ENCODE measurements at regions of chr2 and their contacts with region 1.

Region 1: DNA sequence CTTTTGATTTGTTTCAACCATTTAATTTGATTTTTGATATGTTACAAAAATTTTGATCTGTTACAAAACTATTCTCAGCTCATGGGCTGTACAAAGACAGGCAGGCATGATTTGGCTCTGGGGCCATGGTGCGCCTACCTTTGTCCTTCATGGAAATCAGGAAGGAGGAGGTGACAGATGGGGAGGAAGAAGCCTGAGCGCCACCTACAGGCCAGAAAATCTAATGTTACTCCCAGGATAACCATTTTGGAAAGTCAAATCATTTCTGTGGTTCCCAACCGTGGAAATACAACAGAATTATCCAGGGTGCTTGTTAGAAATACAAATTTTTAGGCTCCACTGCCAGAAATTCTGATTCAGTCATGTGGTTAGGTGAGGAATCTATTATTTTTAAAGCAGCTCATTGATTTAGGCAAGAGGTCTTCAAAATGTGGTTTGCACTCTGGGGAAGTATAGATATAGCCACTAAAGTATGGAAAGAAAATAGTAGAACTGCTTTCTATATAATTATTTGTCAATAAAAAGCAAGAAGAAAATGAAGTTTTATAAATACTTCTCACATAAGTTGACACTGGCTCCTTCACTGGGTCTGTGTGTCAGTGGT is 93.9 kb downstream of the EVA1A start:
- H3K4me3 ChIP-seq: no peak overlapping the region
- H3K27ac ChIP-seq: no peak overlapping the region
- H3K4me1 ChIP-seq: no peaks in the 10 kb centered on the region
- CTCF ChIP-seq: no peak

Region 2: DNA sequence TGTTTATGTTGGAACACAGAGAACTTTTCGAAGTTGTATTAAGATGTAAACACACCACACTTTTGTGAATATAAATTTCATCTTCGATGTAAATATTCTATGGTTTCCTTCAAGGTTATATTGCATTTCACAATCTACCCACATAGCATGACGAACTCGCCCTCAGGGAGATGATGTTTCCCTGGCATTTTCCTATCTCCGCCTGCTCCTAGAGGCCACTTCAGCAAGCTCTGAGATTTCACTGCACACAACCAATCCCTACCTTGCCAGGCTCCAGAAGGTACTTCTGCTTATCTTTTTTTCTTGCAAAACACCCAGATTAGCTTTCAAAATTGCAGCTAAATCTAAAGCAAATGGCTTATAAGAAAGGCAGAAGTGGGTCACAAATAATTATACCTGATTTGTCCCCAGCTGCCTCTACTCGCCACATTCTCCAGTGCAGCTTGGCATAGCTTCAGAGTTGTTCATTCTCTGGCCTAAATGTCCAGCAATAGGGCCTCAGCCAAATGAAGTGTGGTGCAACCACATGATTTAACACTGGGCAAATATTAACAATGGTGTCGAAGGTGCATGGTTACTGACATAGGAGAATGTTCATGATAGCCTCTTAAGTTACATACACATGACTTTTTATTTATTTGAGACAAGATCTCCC is 147.4 kb after region 1 on chr2:
- CTCF ChIA-PET with region 1: interaction called, 137 read pairs
- POLR2A ChIA-PET with region 1: no interaction called
- H3K4me3 ChIP-seq: no peak overlapping the region
- H3K27ac ChIP-seq: no peak overlapping the region
- H3K4me1 ChIP-seq: no peaks in the 10 kb centered on the region
- CTCF ChIP-seq: no peak

Region 3: GRCh38 chr2:75619956-75620740 is 153.3 kb after region 1 on chr2:
- CTCF ChIA-PET with region 1: interaction called, 16 read pairs
- POLR2A ChIA-PET with region 1: no interaction called
- H3K4me3 ChIP-seq: no peak overlapping the region
- H3K27ac ChIP-seq: no peak overlapping the region
- H3K4me1 ChIP-seq: no peaks in the 10 kb centered on the region
- CTCF ChIP-seq: no peak

Region 4: GRCh38 chr2:75627895-75628504 is 161.2 kb after region 1 on chr2:
- CTCF ChIA-PET with region 1: interaction called, 49 read pairs
- POLR2A ChIA-PET with region 1: no interaction called
- H3K4me3 ChIP-seq: no peak overlapping the region
- H3K27ac ChIP-seq: no peak overlapping the region
- H3K4me1 ChIP-seq: no peaks in the 10 kb centered on the region
- CTCF ChIP-seq: peak; percentile 61; the same call in 1 of the 2 replicates